ENCODE measurements at regions of chr16 and their contacts with region 1.

Region 1: DNA sequence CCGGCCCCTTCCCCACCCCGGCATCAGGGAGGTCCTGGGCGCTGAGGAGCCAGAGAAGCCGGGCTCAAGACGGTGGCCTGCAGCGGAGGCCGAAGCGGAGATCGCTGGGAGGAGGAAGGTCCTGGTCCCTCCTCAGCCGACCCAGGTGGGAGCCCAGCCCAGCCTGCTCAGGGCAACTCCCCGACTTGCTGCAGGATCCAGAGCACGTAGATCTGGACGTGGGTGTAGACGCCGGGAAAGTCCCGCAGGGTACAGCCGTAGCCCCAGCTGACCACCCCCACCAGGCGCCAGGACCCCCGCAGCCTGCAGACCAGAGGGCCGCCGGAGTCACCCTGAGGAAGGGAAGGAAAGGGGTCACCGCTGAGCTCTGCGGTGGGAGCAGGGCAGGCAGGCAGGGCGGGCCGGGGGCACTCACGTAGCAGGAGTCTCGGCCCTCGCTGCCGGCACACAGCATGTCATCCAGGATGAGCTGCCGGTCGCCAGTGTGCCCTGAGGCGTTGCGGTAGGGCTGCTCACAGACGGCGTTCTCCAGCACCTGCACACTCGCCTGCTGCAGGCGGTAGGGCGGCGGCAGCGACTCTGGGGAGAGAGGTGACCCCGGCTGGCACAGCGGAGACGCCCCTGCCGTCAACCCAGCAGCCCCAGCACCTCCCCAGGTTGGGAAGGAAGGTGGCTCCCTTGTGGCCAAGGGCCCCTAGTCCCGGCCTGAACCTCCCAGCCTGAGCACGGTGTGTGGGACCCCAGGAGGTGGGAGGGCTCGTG is 5.4 kb downstream of the TPSD1 start:
- DNase-seq: no peak
- H3K4me3 ChIP-seq: no peak overlapping the region
- H3K27ac ChIP-seq: no peak overlapping the region
- H3K4me1 ChIP-seq: peaks cover 5 to 18% (median 9%) of the 10 kb centered on the region in 3 donors
- H3K27me3 ChIP-seq: peaks cover 0 to 84% (median 21%) of the 10 kb centered on the region in 4 donors
- CTCF ChIP-seq: no peak
- POLR2A ChIP-seq: no peak

Region 2: DNA sequence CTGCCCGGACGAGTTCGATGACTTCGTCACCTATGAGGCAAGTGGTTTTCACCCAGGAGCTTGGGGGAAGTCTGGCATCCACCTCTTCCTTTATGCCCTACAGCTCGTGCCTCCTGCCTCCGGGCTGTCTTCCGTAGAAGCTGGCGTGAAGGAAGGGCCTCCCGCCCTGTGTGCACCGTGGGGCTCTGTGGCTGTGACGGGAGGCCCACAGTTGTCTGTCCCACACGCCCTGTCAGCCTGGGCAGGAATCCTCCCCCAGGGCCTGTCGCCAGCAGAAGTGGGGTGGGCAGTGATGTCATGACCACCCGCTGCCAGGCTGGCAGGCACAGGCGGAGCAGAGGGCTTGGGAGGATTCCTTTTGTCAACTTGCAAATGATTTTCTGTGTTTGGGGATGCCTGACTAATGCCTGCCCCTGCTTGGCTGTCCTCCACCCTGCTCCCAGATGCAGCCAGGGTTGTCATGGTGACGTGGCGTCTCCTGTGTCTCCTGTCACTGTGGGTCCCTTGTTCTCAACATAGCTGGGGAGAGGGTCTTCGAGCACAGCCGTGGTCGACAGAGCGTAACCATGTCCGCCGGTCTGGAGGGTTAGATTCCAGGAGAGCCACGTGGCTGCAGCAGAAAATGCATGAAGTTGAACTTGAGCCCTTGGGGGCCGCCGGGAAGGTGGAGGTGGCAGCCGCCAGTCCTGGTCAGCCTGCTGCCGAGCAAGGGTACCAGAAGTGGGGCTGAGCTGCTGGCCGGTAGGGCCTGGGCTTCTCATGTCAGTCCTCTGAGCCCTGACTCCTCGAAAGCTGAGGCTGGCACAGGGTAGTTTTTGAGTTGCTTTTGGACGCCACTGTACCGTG is 789.7 kb before region 1 on chr16:
- intact Hi-C with region 1: loop called (anchors 10 kb)
- DNase-seq: no peak
- H3K4me3 ChIP-seq: no peak overlapping the region
- H3K27ac ChIP-seq: peak overlapping the region in 1 of 4 donors; percentile 13
- H3K4me1 ChIP-seq: peaks cover 0 to 15% (median 10%) of the 10 kb centered on the region in 3 donors
- H3K27me3 ChIP-seq: no peaks in the 10 kb centered on the region
- CTCF ChIP-seq: no peak
- POLR2A ChIP-seq: no peak